CD14-positive monocyte (primary cell): ENCODE measurements at regions of chr1 and their contacts with region 1.

Region 1: DNA sequence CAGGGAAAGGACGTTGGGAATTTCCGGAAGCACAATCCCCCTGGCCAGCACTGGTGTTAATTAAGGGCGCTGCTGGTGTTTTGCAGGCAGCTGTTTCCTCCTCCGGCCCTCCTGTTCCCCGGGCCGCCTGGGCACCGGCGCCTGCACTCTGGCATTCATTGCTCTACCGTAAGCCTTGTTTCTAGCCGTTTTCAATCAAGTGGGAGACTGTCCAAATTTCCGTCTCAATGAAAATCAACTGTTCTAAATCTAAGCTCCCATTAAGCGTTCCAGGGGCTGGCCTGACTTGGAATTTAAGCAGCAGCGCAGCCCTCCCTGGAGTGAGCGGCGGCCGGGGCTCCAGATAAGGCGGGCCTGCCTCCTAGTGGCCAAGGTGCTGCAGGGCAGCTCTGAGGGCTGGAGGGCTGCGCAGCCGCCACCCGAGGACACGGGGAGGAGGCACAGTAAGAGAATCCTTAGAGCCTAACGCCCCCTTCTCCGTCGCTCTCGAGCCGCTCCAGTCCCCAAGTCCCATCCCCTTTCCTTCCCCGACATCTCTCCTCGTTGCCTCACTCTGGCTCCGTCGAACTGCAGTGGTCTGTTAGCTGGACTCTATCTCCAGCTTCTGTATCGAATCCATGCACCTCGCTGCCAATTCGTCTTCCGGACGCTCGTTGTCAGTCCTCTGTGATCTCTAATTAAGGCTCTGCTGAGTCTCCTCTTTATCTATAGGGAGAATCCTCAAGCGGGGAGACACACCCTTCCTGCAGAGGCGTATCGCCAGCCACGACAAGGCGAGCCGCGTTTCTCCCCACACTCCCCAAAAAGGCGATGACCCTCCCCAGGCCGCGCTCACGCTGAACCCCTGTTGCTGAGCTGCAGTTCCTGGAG is 57.8 kb upstream of the LRRC8D start:
- DNase-seq: peak; percentile 73 to 79 (median 77)
- H3K4me3 ChIP-seq: peak overlapping the region; percentile 47 to 74 (median 48)
- H3K4me3 Mint-ChIP-seq: peak overlapping the region; percentile 91 to 98
- H3K27ac ChIP-seq: peak overlapping the region in 1 of 2 donors; percentile 79
- H3K27ac Mint-ChIP-seq: peak overlapping the region; percentile 62 to 95 (median 88)
- H3K4me1 ChIP-seq: peaks cover 52 to 57% of the 10 kb centered on the region in 2 donors
- H3K4me1 Mint-ChIP-seq: peaks cover 55% of the 10 kb centered on the region
- H3K27me3 ChIP-seq: no peaks in the 10 kb centered on the region
- H3K27me3 Mint-ChIP-seq: peaks cover 0 to 5% (median 3%) of the 10 kb centered on the region in 3 donors
- CTCF ChIP-seq: peak; percentile 98

Region 2: DNA sequence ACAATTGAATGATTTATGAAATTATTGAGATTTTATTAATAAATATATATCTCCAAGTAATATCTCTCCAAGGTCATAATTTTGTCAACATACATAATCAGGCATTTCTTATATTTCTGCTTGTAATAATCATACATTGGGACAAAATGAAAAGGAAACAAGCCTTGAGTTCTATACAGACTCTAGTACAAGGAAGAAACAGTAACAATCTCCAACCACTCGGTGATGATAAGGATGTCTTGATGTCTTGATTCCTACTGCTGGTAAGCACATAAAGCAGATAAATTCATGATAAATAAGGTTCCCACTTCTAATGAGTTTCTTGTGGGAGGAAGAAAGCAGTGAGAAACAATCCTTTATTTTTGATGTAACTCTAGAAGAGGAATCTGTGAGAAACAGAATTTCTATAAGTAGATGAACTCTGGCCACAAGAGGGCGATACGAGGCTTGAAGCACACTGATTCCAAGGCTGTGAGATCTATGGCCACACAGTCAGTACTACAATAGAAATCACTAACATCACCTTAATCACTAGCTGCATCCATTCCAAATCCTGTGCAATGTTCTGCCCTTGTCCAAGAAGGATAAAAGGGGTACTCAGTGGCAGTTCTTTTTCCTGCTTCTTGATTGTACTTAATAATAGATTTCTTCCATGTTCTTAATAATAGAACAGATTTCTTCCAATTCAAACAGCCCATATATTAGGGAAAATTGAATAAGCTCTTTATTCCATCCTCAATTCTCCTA is 279.8 kb before region 1 on chr1:
- intact Hi-C with region 1: loop called in 1 of 2 experiments (anchors 10 kb)
- DNase-seq: peak; percentile 56 to 75 (median 70)
- H3K4me3 ChIP-seq: no peak overlapping the region
- H3K4me3 Mint-ChIP-seq: no peak overlapping the region
- H3K27ac ChIP-seq: no peak overlapping the region
- H3K27ac Mint-ChIP-seq: no peak overlapping the region
- H3K4me1 ChIP-seq: peaks cover under 1 to 16% of the 10 kb centered on the region in 2 donors
- H3K4me1 Mint-ChIP-seq: peaks cover 14% of the 10 kb centered on the region
- H3K27me3 ChIP-seq: no peaks in the 10 kb centered on the region
- H3K27me3 Mint-ChIP-seq: peaks cover 1 to 3% (median 2%) of the 10 kb centered on the region in 3 donors
- CTCF ChIP-seq: peak; percentile 87

Region 3: DNA sequence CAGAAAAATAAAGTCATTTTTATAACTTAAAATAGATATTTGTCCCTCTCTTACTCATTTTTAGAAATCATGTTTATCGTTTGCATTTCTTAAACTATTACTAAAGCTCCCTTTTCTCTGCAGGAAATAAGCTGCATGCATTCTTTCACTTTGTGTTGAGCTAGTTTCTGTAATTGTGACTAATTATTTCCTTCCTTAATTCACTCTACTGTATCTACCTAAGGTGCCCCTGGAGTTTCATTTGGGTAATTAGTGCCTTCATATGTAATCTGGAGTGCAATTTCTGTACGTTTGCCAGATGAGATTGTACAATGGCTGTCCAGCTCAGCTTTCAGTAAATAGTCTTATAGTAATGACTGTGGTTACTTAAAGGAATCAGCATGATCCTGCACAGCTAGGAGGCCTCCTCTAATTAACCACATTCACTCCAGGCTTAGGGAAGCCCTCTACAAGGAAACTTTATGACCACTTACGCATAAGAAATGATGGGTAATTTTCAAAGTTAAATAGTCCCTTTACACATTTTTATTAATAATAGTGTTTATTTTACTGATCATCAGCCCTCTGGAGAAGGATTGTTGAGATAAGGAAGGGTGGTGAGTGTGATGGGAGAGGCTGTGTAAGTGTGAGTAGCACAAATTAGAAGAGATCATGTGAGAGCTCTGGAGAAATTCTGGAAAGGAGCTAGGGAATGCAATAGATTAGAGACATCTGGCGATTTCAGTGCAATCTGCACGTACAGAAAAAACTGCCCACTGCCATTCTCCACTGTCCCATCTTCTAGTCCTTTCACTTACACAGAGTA is 43.3 kb before region 1 on chr1:
- intact Hi-C with region 1: loop called (anchors 2 to 5 kb)
- DNase-seq: peak; percentile 56 to 91 (median 85)
- H3K4me3 ChIP-seq: peak overlapping the region in 2 of 3 experiments; percentile 25 to 58
- H3K4me3 Mint-ChIP-seq: peak overlapping the region; percentile 27 to 84
- H3K27ac ChIP-seq: peak overlapping the region; percentile 13 to 83
- H3K27ac Mint-ChIP-seq: peak overlapping the region; percentile 85 to 98 (median 96)
- H3K4me1 ChIP-seq: peaks cover 58 to 68% of the 10 kb centered on the region in 2 donors
- H3K4me1 Mint-ChIP-seq: peaks cover 67% of the 10 kb centered on the region
- H3K27me3 ChIP-seq: no peaks in the 10 kb centered on the region
- H3K27me3 Mint-ChIP-seq: peaks cover 0 to 2% (median 0%) of the 10 kb centered on the region in 3 donors
- CTCF ChIP-seq: peak; percentile 17

Region 4: GRCh38 chr1:89815611-89816010 is 52.6 kb after region 1 on chr1:
- intact Hi-C with region 1: no loop called
- DNase-seq: peak; percentile 85 to 95 (median 94)
- H3K4me3 ChIP-seq: peak overlapping the region in 1 of 3 experiments; percentile 52
- H3K4me3 Mint-ChIP-seq: peak overlapping the region; percentile 3 to 69
- H3K27ac ChIP-seq: peak overlapping the region; percentile 62 to 75
- H3K27ac Mint-ChIP-seq: peak overlapping the region; percentile 83 to 97 (median 94)
- H3K4me1 ChIP-seq: peaks cover 91 to 97% of the 10 kb centered on the region in 2 donors
- H3K4me1 Mint-ChIP-seq: peaks cover 90% of the 10 kb centered on the region
- H3K27me3 ChIP-seq: no peaks in the 10 kb centered on the region
- H3K27me3 Mint-ChIP-seq: no peaks in the 10 kb centered on the region
- CTCF ChIP-seq: no peak